ENCODE measurements at regions of chr10 and their contacts with region 1.

Region 1: GRCh38 chr10:99532687-99533495 is at the start of gene NKX2-3:
- DNase-seq: peak; percentile 77
- ATAC-seq: peak; percentile 74
- H3K4me3 Mint-ChIP-seq: peak within 1 kb of the TSS; percentile 24
- H3K27ac Mint-ChIP-seq: no peak within 1 kb of the TSS
- H3K4me1 Mint-ChIP-seq: peaks cover 43% of the 10 kb centered on the region
- H3K27me3 Mint-ChIP-seq: peaks cover 84% of the 10 kb centered on the region
- total RNA-seq, gene NKX2-3: not detected

Region 2: GRCh38 chr10:99396471-99396870 is 136.4 kb before region 1 on chr10:
- CTCF ChIA-PET with region 1: no interaction called
- POLR2A ChIA-PET with region 1: no interaction called
- intact Hi-C with region 1: no loop called
- DNase-seq: no peak
- ATAC-seq: no peak
- H3K4me3 Mint-ChIP-seq: no peak overlapping the region
- H3K27ac Mint-ChIP-seq: no peak overlapping the region
- H3K4me1 Mint-ChIP-seq: peaks cover 8% of the 10 kb centered on the region
- H3K27me3 Mint-ChIP-seq: no peaks in the 10 kb centered on the region

Region 3: DNA sequence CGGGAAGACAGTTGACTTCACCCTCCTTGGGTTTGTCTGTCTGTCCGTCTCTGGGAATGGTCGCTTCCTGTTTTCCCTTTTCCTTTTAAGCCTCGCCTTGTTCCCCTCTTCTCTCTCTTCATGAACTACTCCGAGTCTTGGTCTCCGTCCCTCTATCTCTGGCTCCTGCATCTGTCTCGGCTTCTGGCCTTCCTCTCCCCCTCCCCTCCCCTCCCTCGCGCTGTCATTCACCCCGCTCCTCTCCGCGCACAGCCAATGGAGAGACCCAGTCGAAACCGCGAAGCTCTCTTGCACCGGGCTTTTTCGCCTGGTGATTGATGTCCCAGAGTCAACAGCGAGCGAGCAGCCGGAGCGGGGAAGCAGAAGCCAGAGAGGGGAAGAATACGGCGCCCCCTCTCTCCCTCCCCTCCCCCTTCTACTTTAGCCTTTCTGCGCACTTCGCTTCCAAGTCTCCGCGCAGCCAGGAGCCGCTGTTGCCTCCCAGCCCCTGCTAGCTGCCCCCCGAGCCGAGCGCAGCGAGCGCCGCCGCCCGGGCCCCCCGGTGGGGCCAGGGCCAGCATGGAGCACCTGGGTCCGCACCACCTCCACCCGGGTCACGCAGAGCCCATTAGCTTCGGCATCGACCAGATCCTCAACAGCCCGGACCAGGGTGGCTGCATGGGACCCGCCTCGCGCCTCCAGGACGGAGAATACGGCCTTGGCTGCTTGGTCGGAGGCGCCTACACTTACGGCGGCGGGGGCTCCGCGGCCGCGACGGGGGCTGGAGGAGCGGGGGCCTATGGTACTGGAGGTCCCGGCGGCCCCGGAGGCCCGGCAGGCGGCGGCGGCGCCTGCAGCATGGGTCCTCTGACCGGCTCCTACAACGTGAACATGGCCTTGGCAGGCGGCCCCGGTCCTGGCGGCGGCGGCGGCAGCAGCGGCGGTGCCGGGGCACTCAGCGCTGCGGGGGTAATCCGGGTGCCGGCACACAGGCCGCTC is 1598.4 kb after region 1 on chr10 and contains the start of gene TLX1:
- CTCF ChIA-PET with region 1: no interaction called
- POLR2A ChIA-PET with region 1: no interaction called
- intact Hi-C with region 1: loop called (anchors 10 kb)
- DNase-seq: peak; percentile 41
- ATAC-seq: no peak
- H3K4me3 Mint-ChIP-seq: peak within 1 kb of the TSS; percentile 21
- H3K27ac Mint-ChIP-seq: no peak within 1 kb of the TSS
- H3K4me1 Mint-ChIP-seq: peaks cover 24% of the 10 kb centered on the region
- H3K27me3 Mint-ChIP-seq: peaks cover 76% of the 10 kb centered on the region
- total RNA-seq, gene TLX1: not detected

Region 4: GRCh38 chr10:101238732-101239105 is 1705.8 kb after region 1 on chr10:
- CTCF ChIA-PET with region 1: no interaction called
- POLR2A ChIA-PET with region 1: no interaction called
- intact Hi-C with region 1: loop called in 1 of 2 experiments (anchors 10 kb)
- DNase-seq: peak; percentile 63
- ATAC-seq: peak; percentile 81
- H3K4me3 Mint-ChIP-seq: no peak overlapping the region
- H3K27ac Mint-ChIP-seq: no peak overlapping the region
- H3K4me1 Mint-ChIP-seq: peaks cover 21% of the 10 kb centered on the region
- H3K27me3 Mint-ChIP-seq: peaks cover 57% of the 10 kb centered on the region

Measured in activated CD4-positive, alpha-beta T cell treated with anti-CD3 and anti-CD28 coated beads for 36 hours (primary cell).